ENCODE measurements at regions of chr15 and their contacts with region 1.

Region 1: DNA sequence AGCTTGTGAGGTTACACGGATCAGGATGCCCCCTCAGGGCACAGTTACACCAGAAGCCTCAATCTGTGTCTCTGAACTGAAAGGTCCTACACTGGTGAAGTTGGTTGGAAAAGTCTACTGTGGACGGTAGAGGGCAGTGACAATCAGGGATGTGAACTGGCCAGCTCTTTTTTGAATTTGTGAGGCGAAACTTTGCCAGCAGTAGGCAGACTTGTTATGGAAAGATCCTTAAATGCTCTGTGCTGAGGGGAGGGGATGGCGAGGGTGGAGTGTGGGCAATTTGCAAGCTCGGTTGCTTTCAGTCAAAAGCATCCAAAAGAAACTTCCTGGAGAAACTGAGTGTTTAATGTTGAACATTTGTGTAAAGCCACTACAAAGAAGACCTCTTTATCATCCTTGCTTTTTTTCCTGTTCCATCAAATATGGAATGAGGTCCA is 127.4 kb upstream of the ABHD17C start:
- DNase-seq: peak; percentile 85
- H3K27ac ChIP-seq: no peak overlapping the region
- CTCF ChIP-seq: peak; percentile 97

Region 2: DNA sequence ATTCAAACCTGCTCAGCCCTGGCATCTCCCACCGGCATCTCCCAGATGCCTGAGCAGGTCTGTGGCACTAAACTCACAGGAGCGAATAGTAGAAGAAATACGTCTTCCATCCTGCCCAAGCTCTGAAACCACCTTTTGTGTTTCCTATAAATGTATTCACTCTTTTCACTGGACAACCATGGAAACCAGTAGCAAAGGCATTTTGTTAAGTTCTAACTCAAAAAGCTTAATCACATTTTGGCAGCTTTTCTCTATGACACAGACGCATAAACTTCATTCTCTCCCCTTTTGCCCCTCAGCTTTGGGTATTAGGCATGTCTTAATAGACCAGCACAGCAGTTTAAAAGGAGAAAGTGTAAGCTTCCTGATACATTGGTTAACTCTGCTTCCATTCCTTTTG is 188.0 kb before region 1 on chr15:
- CTCF ChIA-PET with region 1: no interaction called
- POLR2A ChIA-PET with region 1: no interaction called
- DNase-seq: no peak
- H3K27ac ChIP-seq: no peak overlapping the region
- CTCF ChIP-seq: no peak

Region 3: DNA sequence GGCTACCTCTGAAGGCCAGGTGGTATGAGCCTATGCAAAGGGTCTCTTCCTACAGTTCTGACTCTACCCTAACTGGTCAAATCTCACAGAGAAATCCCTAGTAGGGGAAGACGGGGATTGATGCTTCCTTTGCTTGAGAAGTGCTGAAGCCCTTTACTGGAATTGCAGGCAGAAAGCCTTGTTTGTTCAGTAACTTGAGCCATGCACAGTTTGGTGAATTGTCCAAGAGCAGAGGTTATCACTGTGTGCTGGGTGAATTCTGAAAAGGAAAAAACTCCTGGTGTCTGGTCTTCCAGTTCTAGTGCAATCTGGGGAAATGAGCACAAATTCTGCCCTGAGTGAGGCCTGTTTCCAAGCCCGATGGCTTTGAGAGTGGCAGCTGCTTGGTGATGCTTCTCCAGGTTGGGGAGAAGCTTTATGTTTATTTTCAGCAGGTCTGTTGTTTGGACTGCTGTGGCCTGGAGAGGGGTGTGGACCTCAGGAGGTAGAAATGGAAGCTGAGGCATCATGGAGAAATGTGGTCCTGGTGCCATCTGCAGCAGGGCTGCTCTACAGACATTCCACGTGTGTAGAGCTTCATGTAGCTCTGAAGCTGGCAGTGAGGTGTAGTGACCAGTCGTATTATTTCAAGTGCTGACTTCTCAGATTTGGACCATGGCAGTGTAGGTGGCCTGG is 102.7 kb before region 1 on chr15:
- CTCF ChIA-PET with region 1: no interaction called
- POLR2A ChIA-PET with region 1: no interaction called
- DNase-seq: no peak
- H3K27ac ChIP-seq: no peak overlapping the region
- CTCF ChIP-seq: no peak

Region 4: DNA sequence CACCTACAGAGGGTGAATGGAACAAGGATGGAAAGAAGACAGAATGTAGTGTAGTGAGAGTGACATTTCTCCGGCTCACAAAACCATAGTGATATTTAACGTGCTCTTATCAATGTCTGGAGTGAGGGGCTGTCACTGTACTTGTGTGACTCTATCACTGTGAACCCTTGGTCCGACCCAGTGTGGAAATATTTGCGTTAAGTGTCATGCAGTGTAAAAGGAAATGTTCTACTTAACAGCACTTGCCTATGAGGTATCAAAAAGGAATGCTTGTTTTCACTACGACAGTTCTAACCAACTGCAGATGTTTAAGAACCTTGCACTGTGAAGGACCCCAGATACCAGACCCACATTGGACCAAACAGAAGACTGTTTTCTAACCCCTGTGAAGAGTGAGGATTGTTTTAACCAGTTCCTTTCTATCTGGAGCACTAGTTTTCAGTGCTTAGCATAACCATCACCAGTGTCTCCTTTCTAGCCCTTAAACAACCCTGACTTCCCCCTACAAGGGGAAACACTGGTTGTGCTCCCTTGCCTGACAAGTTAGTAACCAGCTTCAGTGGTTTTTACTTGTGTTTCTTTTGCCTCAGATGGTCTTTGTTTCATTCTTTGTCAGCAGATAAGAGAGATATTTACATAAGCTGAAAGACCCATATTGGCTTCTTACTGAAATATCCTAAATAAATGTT is 17.4 kb before region 1 on chr15:
- CTCF ChIA-PET with region 1: no interaction called
- POLR2A ChIA-PET with region 1: no interaction called
- DNase-seq: peak; percentile 35
- H3K27ac ChIP-seq: no peak overlapping the region
- CTCF ChIP-seq: no peak

Region 5: GRCh38 chr15:80580106-80580505 is 12.4 kb after region 1 on chr15:
- CTCF ChIA-PET with region 1: interaction called, 16 read pairs
- POLR2A ChIA-PET with region 1: no interaction called
- DNase-seq: peak; percentile 94
- H3K27ac ChIP-seq: peak overlapping the region; percentile 99
- CTCF ChIP-seq: no peak

Region 6: GRCh38 chr15:80695104-80695910 is 127.6 kb after region 1 on chr15 and contains the start of gene ABHD17C:
- CTCF ChIA-PET with region 1: interaction called, 25 read pairs
- POLR2A ChIA-PET with region 1: interaction called, 3 read pairs
- DNase-seq: peak; percentile 74
- H3K27ac ChIP-seq: peak within 1 kb of the TSS; percentile 89
- CTCF ChIP-seq: no peak

Region 7: GRCh38 chr15:80776420-80777045 is 208.8 kb after region 1 on chr15:
- CTCF ChIA-PET with region 1: interaction called, 26 read pairs
- POLR2A ChIA-PET with region 1: no interaction called
- DNase-seq: no peak
- H3K27ac ChIP-seq: peak overlapping the region; percentile 68
- CTCF ChIP-seq: peak; percentile 36; the same call in 1 of the 2 replicates

Region 8: GRCh38 chr15:80970018-80970658 is 402.4 kb after region 1 on chr15:
- CTCF ChIA-PET with region 1: interaction called, 16 read pairs
- POLR2A ChIA-PET with region 1: no interaction called
- DNase-seq: peak; percentile 70
- H3K27ac ChIP-seq: no peak overlapping the region
- CTCF ChIP-seq: peak; percentile 94